Naive thymus-derived CD4-positive, alpha-beta T cell (primary cell): ENCODE measurements at regions of chr7 and their contacts with region 1.

Region 1: DNA sequence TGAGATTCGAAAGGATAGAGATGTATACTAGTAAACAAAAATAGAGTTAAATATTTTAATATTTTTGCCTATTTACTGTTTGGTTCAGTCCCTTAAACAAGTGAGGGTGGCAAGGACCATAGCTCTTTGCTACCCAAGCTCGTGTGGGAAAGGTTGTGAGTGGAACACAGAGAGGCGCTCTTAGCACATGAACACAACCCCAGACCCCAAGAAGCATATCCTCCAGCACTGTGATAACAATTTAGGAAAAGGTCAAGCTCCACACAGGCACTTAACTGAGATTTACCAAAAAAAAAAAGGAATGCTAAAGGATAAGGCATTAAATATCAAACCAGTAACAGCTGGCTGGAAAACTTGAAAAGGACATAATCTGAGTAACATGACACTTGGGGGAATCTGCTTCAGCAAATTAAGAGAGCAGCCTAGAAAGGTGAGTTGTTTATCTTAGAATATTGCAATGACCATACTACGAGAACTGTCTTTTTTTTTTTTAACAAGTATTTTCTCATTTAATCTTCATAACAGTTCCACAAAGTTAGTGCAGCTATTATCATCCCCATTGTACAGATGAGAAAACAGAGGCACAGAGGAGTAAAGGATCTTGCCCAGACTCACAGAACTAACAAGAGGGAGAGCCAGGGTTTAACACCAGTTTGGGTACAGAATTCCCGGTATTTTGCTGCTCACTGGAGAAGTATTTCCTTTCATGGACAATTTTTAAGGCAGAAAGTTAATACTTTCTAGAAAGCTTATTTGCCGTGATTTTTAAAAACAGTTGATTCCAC is 303.5 kb upstream of the AOAH start:
- DNase-seq: no peak
- ATAC-seq: no peak
- H3K4me3 ChIP-seq: no peak overlapping the region
- H3K4me3 Mint-ChIP-seq: no peak overlapping the region
- H3K27ac ChIP-seq: no peak overlapping the region
- H3K27ac Mint-ChIP-seq: no peak overlapping the region
- H3K4me1 ChIP-seq: peaks cover 0 to 8% of the 10 kb centered on the region in 2 donors
- H3K4me1 Mint-ChIP-seq: peaks cover 22 to 53% (median 41%) of the 10 kb centered on the region in 7 donors
- H3K27me3 ChIP-seq: no peaks in the 10 kb centered on the region
- H3K27me3 Mint-ChIP-seq: no peaks in the 10 kb centered on the region

Region 2: DNA sequence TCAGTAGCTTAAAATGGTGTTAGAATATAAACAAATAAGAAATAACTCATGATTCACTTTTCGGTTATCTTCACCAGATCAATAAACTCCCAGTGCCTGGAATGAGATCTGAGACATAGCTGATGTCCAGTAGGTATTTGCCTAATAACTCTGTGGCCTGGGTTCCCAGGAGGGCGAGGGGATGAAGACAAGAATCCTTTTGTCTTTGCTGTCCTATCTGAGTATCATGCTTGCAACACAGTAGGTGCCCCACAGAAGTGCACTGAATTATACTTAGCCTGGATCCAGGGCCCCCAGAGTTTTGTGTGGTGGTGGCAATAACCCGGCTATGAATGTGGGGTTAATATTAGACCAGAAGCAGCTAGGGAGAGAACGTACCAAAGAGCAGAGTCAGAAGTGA is 46.6 kb after region 1 on chr7:
- CTCF ChIA-PET with region 1: no interaction called
- POLR2A ChIA-PET with region 1: no interaction called
- intact Hi-C with region 1: loop called in 1 of 2 experiments (anchors 10 kb)
- DNase-seq: no peak
- ATAC-seq: no peak
- H3K4me3 ChIP-seq: no peak overlapping the region
- H3K4me3 Mint-ChIP-seq: no peak overlapping the region
- H3K27ac ChIP-seq: no peak overlapping the region
- H3K27ac Mint-ChIP-seq: no peak overlapping the region
- H3K4me1 ChIP-seq: no peaks in the 10 kb centered on the region
- H3K4me1 Mint-ChIP-seq: peaks cover 4 to 31% (median 21%) of the 10 kb centered on the region in 7 donors
- H3K27me3 ChIP-seq: no peaks in the 10 kb centered on the region
- H3K27me3 Mint-ChIP-seq: no peaks in the 10 kb centered on the region